ENCODE measurements at regions of chr1 and their contacts with region 1.

Region 1: DNA sequence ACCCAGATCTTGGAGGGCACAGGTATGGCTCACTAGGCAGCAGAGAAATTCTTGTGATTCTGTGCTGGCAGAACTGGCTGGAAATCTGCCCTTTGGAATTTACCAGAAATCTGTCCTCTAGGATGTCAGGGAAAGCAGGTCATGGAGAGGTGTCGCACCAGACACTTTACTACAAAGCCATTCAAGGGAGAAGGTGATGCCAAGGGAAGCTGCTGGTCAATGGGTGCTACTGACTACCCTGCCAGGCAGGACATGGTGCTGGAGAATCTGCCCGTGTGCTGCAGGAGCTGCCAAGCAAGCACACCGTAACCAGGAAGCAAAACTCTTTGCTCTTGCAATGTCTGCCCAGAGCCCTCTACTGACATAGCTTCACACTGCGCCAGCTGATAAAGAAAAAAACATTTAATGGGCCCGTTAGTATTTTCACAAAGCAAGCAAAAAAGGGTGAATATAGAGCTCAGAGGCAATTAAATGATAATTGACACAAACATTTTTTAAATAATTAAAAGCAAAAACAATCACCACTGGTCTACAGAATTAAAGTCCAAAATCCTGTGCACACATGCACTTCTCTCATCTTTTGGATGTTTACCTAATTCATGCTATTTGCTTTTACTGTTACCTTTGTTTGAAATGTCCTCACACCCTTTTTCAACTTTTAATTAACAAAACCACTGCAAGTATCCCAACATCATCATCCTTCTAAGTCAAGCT is 7.2 kb upstream of the FBXO28 start:
- DNase-seq: no peak
- ATAC-seq: peak; percentile 99
- H3K4me3 ChIP-seq: no peak overlapping the region
- H3K27ac ChIP-seq: no peak overlapping the region
- H3K4me1 ChIP-seq: no peaks in the 10 kb centered on the region
- H3K27me3 ChIP-seq: no peaks in the 10 kb centered on the region
- CTCF ChIP-seq: peak; percentile 48 to 51 (median 50)
- EP300 ChIP-seq: no peak
- POLR2A ChIP-seq: peak; percentile 42; the same call in 1 of the 2 replicates
- RAD21 ChIP-seq: peak; percentile 54

Region 2: DNA sequence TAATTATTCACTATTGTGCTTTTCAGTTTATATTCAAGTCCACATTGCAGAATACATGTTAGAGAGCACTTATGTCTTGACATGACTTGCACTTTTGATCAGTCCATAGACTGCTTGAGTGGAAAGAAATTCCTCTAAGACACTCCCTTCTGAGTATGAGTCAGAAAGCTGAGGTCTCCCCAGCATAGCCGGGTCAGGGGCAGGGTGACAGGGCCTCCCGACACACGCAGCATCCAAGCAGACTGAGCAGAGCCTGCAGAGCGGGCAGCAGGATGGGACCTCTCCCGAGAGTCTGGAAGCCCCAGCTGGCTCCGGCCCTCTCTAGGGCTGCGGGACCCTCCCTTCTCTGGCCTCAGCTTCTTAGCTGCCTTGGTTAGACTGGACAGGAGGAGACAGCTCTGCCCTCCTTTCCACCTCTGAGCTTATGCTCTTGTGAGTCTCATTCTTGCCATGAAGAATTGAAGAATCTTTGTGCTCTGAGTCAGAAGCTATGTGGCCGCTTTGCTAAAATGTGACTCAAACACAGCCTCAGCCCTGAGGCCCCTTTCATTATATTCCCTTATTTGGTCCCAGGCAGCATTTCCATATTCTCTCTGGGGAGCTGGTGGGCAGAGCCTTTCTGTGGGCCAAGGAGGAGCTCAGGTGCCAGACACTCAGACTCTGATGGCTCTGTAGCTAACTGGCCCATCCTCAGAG is 405.6 kb before region 1 on chr1:
- CTCF ChIA-PET with region 1: interaction called, 7 read pairs
- POLR2A ChIA-PET with region 1: no interaction called
- RAD21 ChIA-PET with region 1: interaction called, 3 read pairs
- SMC1A ChIA-PET with region 1: interaction called, 3 read pairs
- in situ Hi-C with region 1: no loop called
- intact Hi-C with region 1: loop called (anchors 2 kb)
- DNase-seq: no peak
- ATAC-seq: no peak; the same call in 2 of the 3 replicates
- H3K4me3 ChIP-seq: no peak overlapping the region
- H3K27ac ChIP-seq: no peak overlapping the region
- H3K4me1 ChIP-seq: peaks cover 6% of the 10 kb centered on the region
- H3K27me3 ChIP-seq: no peaks in the 10 kb centered on the region
- CTCF ChIP-seq: no peak
- EP300 ChIP-seq: no peak
- POLR2A ChIP-seq: no peak
- RAD21 ChIP-seq: no peak

Region 3: DNA sequence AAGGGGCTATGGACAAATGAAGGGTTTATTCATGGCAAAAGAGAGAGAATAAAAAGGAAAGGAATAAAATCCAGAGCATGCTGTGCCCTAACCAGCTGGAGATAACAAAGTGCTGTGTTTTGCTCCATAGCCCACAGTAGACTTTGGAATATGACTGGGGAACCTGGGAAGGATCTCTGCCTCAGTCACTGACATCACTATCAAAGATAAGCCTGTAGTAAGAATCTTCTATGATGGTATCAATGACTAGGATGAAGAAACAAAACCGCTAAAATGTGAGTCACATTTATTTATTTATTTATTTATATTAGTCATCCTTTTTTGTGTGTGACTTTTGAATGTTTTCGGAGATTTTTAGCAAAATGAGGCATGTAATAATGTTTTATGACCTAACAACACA is 166.9 kb after region 1 on chr1:
- CTCF ChIA-PET with region 1: no interaction called
- POLR2A ChIA-PET with region 1: no interaction called
- RAD21 ChIA-PET with region 1: no interaction called
- SMC1A ChIA-PET with region 1: no interaction called
- in situ Hi-C with region 1: no loop called
- intact Hi-C with region 1: no loop called
- DNase-seq: no peak
- ATAC-seq: no peak
- H3K4me3 ChIP-seq: no peak overlapping the region
- H3K27ac ChIP-seq: no peak overlapping the region
- H3K4me1 ChIP-seq: peaks cover under 1% of the 10 kb centered on the region; the same call in 1 of the 2 replicates
- H3K27me3 ChIP-seq: no peaks in the 10 kb centered on the region
- CTCF ChIP-seq: no peak
- EP300 ChIP-seq: no peak
- POLR2A ChIP-seq: no peak
- RAD21 ChIP-seq: no peak

Measured in GM12878 (cell line).